MCF 10A (cell line): ENCODE measurements at regions of chr22 and their contacts with region 1.

Region 1: GRCh38 chr22:38766076-38766777 is 10.4 kb upstream of the SUN2 start:
- DNase-seq: peak; percentile 89
- H3K4me3 Mint-ChIP-seq: no peak overlapping the region
- H3K27ac Mint-ChIP-seq: no peak overlapping the region
- H3K4me1 Mint-ChIP-seq: peaks cover 6% of the 10 kb centered on the region
- H3K27me3 Mint-ChIP-seq: no peaks in the 10 kb centered on the region
- CTCF ChIP-seq: peak; percentile 91

Region 2: DNA sequence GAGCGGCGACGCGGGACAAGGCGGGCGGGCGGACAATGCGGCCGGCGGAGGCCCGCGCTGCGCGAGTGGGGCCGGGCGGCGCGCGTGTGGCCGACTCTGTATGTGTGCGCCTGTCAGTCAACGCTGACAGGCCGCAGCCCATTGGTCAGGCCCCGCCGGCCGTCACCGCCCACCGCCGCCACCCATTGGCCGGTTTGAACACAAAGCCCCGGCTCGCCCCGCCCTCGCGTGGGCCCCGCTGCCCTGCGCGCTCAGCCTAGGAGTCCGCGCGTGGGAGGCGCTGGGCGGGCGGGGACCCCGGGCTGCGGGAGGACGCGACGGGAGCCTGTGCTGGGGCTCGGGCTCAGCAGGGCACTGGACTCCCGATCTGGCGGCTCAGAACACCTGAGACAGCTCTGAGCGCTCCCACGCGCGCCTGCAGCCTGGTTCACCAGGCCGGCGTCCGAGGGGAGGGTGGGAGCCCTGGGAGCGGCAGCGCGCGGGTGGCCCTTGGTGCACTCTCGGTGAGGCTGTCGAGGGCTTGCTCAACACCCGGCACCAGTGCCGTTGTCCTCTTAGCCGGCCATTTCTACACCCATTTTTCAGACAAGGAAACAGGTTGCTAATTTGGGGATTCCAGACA is 10.2 kb before region 1 on chr22 and contains the start of gene SUN2:
- CTCF ChIA-PET with region 1: interaction called, 8 read pairs
- POLR2A ChIA-PET with region 1: interaction called, 11 read pairs
- intact Hi-C with region 1: no loop called
- DNase-seq: peak; percentile 84
- H3K4me3 Mint-ChIP-seq: peak within 1 kb of the TSS; percentile 81
- H3K27ac Mint-ChIP-seq: peak within 1 kb of the TSS; percentile 82
- H3K4me1 Mint-ChIP-seq: peaks cover 19% of the 10 kb centered on the region
- H3K27me3 Mint-ChIP-seq: no peaks in the 10 kb centered on the region
- CTCF ChIP-seq: no peak
- total RNA-seq, gene SUN2: 51.9 and 66.8 TPM in 2 replicates

Region 3: GRCh38 chr22:38786631-38787030 is 20.4 kb after region 1 on chr22:
- CTCF ChIA-PET with region 1: interaction called, 21 read pairs
- POLR2A ChIA-PET with region 1: interaction called, 3 read pairs
- intact Hi-C with region 1: no loop called
- DNase-seq: no peak
- H3K4me3 Mint-ChIP-seq: no peak overlapping the region
- H3K27ac Mint-ChIP-seq: no peak overlapping the region
- H3K4me1 Mint-ChIP-seq: peaks cover 14% of the 10 kb centered on the region
- H3K27me3 Mint-ChIP-seq: no peaks in the 10 kb centered on the region
- CTCF ChIP-seq: no peak

Region 4: GRCh38 chr22:39003165-39003638 is 237.0 kb after region 1 on chr22:
- CTCF ChIA-PET with region 1: interaction called, 11 read pairs
- POLR2A ChIA-PET with region 1: no interaction called
- intact Hi-C with region 1: loop called (anchors 1 kb)
- DNase-seq: peak; percentile 87
- H3K4me3 Mint-ChIP-seq: no peak overlapping the region
- H3K27ac Mint-ChIP-seq: no peak overlapping the region
- H3K4me1 Mint-ChIP-seq: no peaks in the 10 kb centered on the region
- H3K27me3 Mint-ChIP-seq: peaks cover 20% of the 10 kb centered on the region
- CTCF ChIP-seq: peak; percentile 66